ENCODE measurements at regions of chr4 and their contacts with region 1.

Region 1: GRCh38 chr4:67871867-67872266 is 11.9 kb downstream of the TMPRSS11D start:
- DNase-seq: no peak
- H3K4me3 Mint-ChIP-seq: no peak overlapping the region
- H3K27ac Mint-ChIP-seq: no peak overlapping the region
- H3K4me1 Mint-ChIP-seq: no peaks in the 10 kb centered on the region
- H3K27me3 Mint-ChIP-seq: no peaks in the 10 kb centered on the region
- CTCF ChIP-seq: no peak

Region 2: DNA sequence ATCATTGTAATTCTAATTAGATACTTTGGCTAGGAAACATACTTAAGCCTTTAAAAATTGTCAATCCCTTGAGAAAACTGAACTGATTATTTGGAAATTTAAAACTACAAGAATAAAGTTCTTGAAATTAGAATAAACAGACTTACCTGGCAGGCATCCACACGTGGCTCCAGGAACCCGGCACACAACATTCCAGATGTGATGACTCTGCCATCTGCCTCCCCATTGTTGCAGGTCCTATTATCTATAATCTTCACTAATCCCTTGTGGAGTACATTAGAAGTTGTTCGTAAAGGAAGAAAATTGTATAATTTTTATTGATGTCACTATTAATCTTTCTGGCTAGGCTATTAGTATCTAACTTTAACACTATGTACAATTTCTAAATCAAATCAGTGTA is 101.4 kb before region 1 on chr4:
- CTCF ChIA-PET with region 1: no interaction called
- intact Hi-C with region 1: no loop called
- DNase-seq: no peak
- H3K4me3 Mint-ChIP-seq: no peak overlapping the region
- H3K27ac Mint-ChIP-seq: no peak overlapping the region
- H3K4me1 Mint-ChIP-seq: no peaks in the 10 kb centered on the region
- H3K27me3 Mint-ChIP-seq: no peaks in the 10 kb centered on the region
- CTCF ChIP-seq: no peak

Region 3: GRCh38 chr4:67996127-67996526 is 124.3 kb after region 1 on chr4:
- CTCF ChIA-PET with region 1: no interaction called
- intact Hi-C with region 1: loop called (anchors 10 kb)
- DNase-seq: no peak
- H3K4me3 Mint-ChIP-seq: no peak overlapping the region
- H3K27ac Mint-ChIP-seq: no peak overlapping the region
- H3K4me1 Mint-ChIP-seq: no peaks in the 10 kb centered on the region
- H3K27me3 Mint-ChIP-seq: no peaks in the 10 kb centered on the region
- CTCF ChIP-seq: no peak

Measured in Calu3 (cell line).